Tibial artery (tissue), 4 donors: ENCODE measurements at regions of chr1 and their contacts with region 1.

Region 1: DNA sequence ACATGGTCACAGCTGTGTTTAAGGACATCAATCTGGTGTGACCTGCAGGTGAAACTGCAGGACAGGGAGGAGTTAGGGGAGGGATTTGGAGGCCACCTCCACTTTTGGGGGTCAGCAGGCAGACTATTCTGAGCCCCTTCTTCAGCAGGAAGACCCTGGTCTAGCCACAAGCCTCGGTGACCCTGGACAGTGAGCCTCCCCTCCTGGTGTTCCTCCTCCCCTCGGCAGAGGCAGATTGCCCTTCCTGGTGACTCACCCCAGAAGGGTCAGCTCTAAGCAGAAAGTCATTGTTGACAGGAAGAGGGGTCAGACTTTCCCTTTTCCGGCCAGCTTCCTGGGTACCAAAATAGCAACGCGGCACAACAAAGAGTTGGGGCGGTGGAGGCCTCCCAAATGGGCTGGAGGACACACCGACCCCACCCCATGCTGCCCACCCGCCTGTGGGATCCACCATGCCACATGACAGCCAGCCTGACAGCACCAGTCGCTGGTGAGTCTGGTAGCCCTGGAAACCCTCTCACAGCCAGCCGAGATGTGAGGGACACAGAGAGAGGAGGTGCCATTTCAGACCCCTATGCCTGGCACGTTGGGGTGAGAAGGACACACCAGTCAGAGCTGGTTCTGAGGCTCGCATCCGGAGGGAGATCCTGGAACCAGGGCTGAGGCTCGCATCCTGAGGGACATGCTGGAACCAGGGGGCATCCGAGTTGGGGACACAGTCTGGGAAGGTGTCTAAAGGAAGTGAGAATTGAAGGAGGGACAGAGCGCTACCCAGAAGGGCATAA is 14.7 kb upstream of the CSF1 start:
- DNase-seq: peak in 1 of 2 donors; percentile 38
- H3K4me3 ChIP-seq: no peak overlapping the region
- H3K27ac ChIP-seq: no peak overlapping the region
- H3K4me1 ChIP-seq: peaks cover 0 to 19% (median 11%) of the 10 kb centered on the region in 4 donors
- H3K27me3 ChIP-seq: no peaks in the 10 kb centered on the region
- CTCF ChIP-seq: no peak

Region 2: GRCh38 chr1:109837852-109838570 is 57.9 kb before region 1 on chr1:
- intact Hi-C with region 1: loop called (anchors 1 kb)
- DNase-seq: no peak
- H3K4me3 ChIP-seq: no peak overlapping the region
- H3K27ac ChIP-seq: no peak overlapping the region
- H3K4me1 ChIP-seq: no peaks in the 10 kb centered on the region
- H3K27me3 ChIP-seq: no peaks in the 10 kb centered on the region
- CTCF ChIP-seq: no peak

Region 3: GRCh38 chr1:110053557-110054428 is 157.9 kb after region 1 on chr1:
- intact Hi-C with region 1: no loop called
- DNase-seq: peak in 1 of 2 donors; percentile 71
- H3K4me3 ChIP-seq: no peak overlapping the region
- H3K27ac ChIP-seq: no peak overlapping the region
- H3K4me1 ChIP-seq: peaks cover 0 to 5% (median 0%) of the 10 kb centered on the region in 4 donors
- H3K27me3 ChIP-seq: no peaks in the 10 kb centered on the region
- CTCF ChIP-seq: peak; percentile 85 to 95